CD8-positive, alpha-beta T cell (primary cell): ENCODE measurements at regions of chr6 and their contacts with region 1.

Region 1: GRCh38 chr6:117602151-117602898 is at the start of gene GOPC:
- DNase-seq: peak; percentile 88 to 99 (median 93)
- ATAC-seq: peak; percentile 94
- H3K4me3 ChIP-seq: peak within 1 kb of the TSS; percentile 76 to 86
- H3K4me3 Mint-ChIP-seq: peak within 1 kb of the TSS; percentile 100
- H3K27ac ChIP-seq: peak within 1 kb of the TSS; percentile 79 to 85
- H3K27ac Mint-ChIP-seq: peak within 1 kb of the TSS; percentile 99
- H3K4me1 ChIP-seq: peaks cover 16% of the 10 kb centered on the region
- H3K4me1 Mint-ChIP-seq: peaks cover 46% of the 10 kb centered on the region
- H3K27me3 ChIP-seq: no peaks in the 10 kb centered on the region
- H3K27me3 Mint-ChIP-seq: no peaks in the 10 kb centered on the region
- CTCF ChIP-seq: no peak
- total RNA-seq, gene GOPC: 7.5 to 8.1 TPM

Region 2: DNA sequence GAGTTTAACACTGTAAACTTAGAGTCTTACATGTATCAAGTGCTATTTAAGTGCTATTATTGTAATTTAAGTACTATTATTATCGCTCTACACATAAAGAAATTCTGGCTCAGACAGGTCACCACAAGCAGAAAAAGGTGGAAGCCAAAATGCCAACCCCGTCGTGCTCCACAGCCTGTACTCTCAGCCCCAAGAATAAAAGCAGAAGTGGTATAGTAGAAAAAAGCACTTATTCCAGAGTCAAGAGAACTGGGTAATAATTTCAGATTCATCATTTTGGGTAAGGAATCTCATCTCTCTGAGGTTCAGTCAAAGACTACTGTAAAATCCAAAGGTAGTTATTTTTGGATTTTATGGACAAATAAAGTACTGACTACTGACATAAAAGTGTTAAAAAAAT is 934.7 kb before region 1 on chr6:
- CTCF ChIA-PET with region 1: no interaction called
- POLR2A ChIA-PET with region 1: no interaction called
- intact Hi-C with region 1: loop called in 1 of 2 experiments (anchors 10 kb)
- DNase-seq: no peak
- ATAC-seq: no peak
- H3K4me3 ChIP-seq: peak overlapping the region; percentile 71 to 83
- H3K4me3 Mint-ChIP-seq: peak overlapping the region; percentile 99
- H3K27ac ChIP-seq: peak overlapping the region; percentile 70 to 84
- H3K27ac Mint-ChIP-seq: no peak overlapping the region
- H3K4me1 ChIP-seq: peaks cover 33% of the 10 kb centered on the region
- H3K4me1 Mint-ChIP-seq: peaks cover 44% of the 10 kb centered on the region
- H3K27me3 ChIP-seq: no peaks in the 10 kb centered on the region
- H3K27me3 Mint-ChIP-seq: no peaks in the 10 kb centered on the region
- CTCF ChIP-seq: no peak

Region 3: DNA sequence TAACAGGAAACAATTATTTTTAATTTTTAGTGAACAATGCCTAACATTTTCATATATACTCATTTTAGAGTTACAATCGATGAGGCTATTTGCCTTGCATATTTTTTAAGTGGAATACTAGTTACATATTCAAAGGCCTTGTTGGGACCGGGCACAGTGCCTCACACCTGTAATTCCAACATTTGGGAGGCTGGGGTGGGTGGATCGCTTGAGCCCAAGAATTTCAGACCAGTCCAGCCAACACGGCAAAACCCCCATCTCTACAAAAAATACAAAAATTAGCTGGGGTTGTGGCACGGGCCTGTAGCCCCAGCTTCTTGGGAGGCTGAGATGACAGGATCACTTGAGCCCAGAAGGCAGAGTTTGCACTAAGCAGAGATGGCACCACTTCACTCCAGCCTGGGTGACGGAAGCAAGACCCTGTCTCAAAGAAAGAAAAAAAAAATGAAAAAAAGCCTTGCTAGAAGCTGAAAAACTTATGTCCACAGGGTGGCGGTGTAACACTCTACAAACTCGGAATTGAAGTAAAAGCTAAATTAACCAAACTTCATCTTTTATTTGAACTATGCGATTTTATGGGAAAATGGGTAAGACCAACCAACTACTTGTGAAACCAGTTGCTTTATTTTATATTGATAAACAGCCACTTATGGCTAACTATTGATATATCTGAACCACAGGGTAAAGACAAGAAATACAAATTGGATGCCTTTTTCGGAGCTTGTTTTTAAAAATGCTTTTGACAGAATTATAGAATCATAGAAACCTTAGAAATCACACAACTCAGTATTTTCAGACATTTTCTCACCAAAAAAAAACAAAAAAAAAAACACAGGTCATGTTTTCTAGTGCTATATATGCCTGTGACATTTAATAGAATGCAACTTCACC is 152.5 kb before region 1 on chr6:
- CTCF ChIA-PET with region 1: interaction called, 105 read pairs
- POLR2A ChIA-PET with region 1: interaction called, 6 read pairs
- intact Hi-C with region 1: loop called (anchors 1 kb)
- DNase-seq: peak; percentile 20 to 82 (median 65)
- ATAC-seq: peak; percentile 58
- H3K4me3 ChIP-seq: no peak overlapping the region
- H3K4me3 Mint-ChIP-seq: no peak overlapping the region
- H3K27ac ChIP-seq: no peak overlapping the region
- H3K27ac Mint-ChIP-seq: no peak overlapping the region
- H3K4me1 ChIP-seq: no peaks in the 10 kb centered on the region
- H3K4me1 Mint-ChIP-seq: no peaks in the 10 kb centered on the region
- H3K27me3 ChIP-seq: peaks cover 0 to 3% of the 10 kb centered on the region in 2 experiments
- H3K27me3 Mint-ChIP-seq: peaks cover 26% of the 10 kb centered on the region
- CTCF ChIP-seq: peak; percentile 82

Region 4: DNA sequence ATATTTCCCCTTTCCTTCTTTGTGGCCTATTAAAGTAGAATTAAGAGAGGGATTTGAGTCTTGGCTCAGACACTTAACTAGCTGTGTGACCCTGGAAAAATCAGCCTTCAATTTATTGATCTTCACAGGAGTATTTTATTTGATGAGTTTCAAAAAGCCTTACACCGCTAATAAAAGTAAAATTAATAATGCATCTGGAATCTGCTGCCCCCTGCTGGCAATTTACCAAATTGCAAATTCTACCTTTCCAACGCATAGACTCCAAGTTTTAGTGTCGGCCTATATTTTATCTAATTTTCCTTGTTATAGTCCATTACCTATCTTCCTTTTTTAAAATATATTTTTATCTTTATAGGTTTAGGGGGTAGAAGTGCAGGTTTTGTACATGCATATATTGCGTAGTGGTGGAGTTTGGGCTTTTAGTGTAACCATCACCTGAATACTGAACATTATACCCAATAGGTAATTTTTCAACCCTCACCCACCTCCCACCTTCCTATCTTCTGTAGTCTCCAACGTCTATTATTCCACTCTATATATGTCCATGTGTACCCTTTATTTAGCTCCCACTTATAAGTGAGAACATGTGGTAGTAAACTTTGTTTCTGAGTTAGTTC is 46.3 kb before region 1 on chr6:
- CTCF ChIA-PET with region 1: interaction called, 12 read pairs
- POLR2A ChIA-PET with region 1: interaction called, 5 read pairs
- intact Hi-C with region 1: loop called in 1 of 2 experiments (anchors 2 kb)
- DNase-seq: peak in 8 of 9 experiments; percentile 26 to 78 (median 65)
- ATAC-seq: peak; percentile 55
- H3K4me3 ChIP-seq: no peak overlapping the region
- H3K4me3 Mint-ChIP-seq: no peak overlapping the region
- H3K27ac ChIP-seq: no peak overlapping the region
- H3K27ac Mint-ChIP-seq: no peak overlapping the region
- H3K4me1 ChIP-seq: peaks cover under 1% of the 10 kb centered on the region
- H3K4me1 Mint-ChIP-seq: peaks cover 8% of the 10 kb centered on the region
- H3K27me3 ChIP-seq: no peaks in the 10 kb centered on the region
- H3K27me3 Mint-ChIP-seq: no peaks in the 10 kb centered on the region
- CTCF ChIP-seq: peak; percentile 97

Region 5: DNA sequence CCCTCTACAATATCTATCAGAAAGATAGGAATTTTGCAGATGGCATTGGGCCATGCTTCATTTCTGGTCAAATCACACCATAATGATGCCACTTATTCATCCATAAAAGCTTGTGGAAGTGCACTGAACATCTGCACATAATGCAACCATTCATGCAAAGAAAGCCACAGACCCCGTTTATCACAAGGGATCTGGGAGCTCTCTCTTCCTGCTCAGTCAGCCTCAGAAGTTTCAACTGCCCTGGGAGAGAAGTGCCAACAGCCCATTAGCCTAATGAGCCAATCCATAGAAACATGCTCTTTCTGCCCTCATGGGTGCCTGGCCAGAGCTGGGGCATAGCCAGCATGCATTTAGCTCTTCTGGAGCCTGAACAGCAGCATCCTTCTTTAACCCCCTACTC is 390.5 kb after region 1 on chr6:
- CTCF ChIA-PET with region 1: no interaction called
- POLR2A ChIA-PET with region 1: no interaction called
- intact Hi-C with region 1: no loop called
- DNase-seq: no peak
- ATAC-seq: no peak
- H3K4me3 ChIP-seq: no peak overlapping the region
- H3K4me3 Mint-ChIP-seq: no peak overlapping the region
- H3K27ac ChIP-seq: no peak overlapping the region
- H3K27ac Mint-ChIP-seq: no peak overlapping the region
- H3K4me1 ChIP-seq: no peaks in the 10 kb centered on the region
- H3K4me1 Mint-ChIP-seq: no peaks in the 10 kb centered on the region
- H3K27me3 ChIP-seq: no peaks in the 10 kb centered on the region
- H3K27me3 Mint-ChIP-seq: peaks cover 12% of the 10 kb centered on the region
- CTCF ChIP-seq: no peak

Region 6: DNA sequence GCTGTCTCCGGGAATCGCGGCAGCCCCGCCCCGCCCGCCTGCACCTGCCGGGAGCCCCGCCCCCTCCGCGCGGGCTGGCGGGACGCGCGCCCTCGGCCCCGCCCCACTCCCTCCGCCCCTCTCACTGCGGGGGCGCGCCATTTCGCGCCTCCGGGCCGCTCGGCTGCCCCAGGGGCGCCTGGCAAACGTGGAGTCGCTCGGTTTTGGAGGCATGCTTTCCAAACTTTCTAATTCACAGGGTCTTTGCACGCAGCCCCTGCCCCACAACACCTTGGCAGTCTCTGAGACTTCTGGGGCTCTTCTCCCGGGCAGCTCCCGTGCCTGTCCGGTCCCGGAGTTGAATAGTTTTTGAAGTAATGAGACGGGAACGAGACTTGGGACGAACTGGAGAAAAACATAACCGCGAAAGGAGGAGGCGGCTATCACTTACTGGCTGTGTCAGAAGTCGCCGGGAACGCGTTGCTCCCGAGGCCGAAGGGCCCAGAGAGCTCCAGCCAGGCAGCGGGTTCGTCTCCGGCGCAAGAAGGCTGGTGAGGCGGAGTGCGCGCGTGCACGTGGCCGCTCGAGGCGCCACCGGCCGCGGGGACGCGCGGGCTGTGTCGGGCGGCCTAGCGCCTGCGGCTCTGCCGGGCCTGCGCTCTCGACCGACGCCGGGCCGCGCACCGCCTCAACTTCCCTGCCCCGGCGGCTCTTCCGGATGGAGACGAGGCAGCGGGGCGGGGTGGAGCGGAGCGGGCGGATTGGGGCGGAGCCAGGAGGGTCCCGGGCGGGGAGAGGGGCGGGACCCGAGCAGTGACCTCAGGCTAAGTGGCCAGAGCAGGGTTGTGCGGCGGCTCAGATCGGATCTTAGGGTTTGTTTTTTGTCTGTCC is 1332.4 kb after region 1 on chr6 and contains the start of gene MCM9:
- CTCF ChIA-PET with region 1: no interaction called
- POLR2A ChIA-PET with region 1: no interaction called
- intact Hi-C with region 1: loop called in 1 of 2 experiments (anchors 5 kb)
- DNase-seq: peak; percentile 76 to 95 (median 84)
- ATAC-seq: peak; percentile 87
- H3K4me3 ChIP-seq: peak within 1 kb of the TSS; percentile 96 to 97
- H3K4me3 Mint-ChIP-seq: peak within 1 kb of the TSS; percentile 91
- H3K27ac ChIP-seq: peak within 1 kb of the TSS; percentile 87 to 89
- H3K27ac Mint-ChIP-seq: peak within 1 kb of the TSS; percentile 90
- H3K4me1 ChIP-seq: peaks cover 7% of the 10 kb centered on the region
- H3K4me1 Mint-ChIP-seq: peaks cover 43% of the 10 kb centered on the region
- H3K27me3 ChIP-seq: no peaks in the 10 kb centered on the region
- H3K27me3 Mint-ChIP-seq: no peaks in the 10 kb centered on the region
- CTCF ChIP-seq: no peak
- total RNA-seq, gene MCM9: 32.9 to 34.1 TPM